HEK293 (cell line): ENCODE measurements at regions of chr12 and their contacts with region 1.

Region 1: GRCh38 chr12:49279706-49280159 is 14.9 kb downstream of the TUBA1C start:
- H3K4me3 ChIP-seq: no peak overlapping the region
- H3K27ac ChIP-seq: peak overlapping the region; percentile 65
- H3K4me1 ChIP-seq: peaks cover 4% of the 10 kb centered on the region; the same call in 1 of the 2 replicates
- CTCF ChIP-seq: no peak

Region 2: GRCh38 chr12:49264738-49265515 is 14.8 kb before region 1 on chr12 and contains the start of gene TUBA1C:
- CTCF ChIA-PET with region 1: interaction called, 5 read pairs
- POLR2A ChIA-PET with region 1: interaction called, 33 read pairs
- H3K4me3 ChIP-seq: peak within 1 kb of the TSS; percentile 94
- H3K27ac ChIP-seq: peak within 1 kb of the TSS; percentile 84
- H3K4me1 ChIP-seq: peaks cover 5% of the 10 kb centered on the region
- CTCF ChIP-seq: 0 out of 2 replicates have a peak, but pooled peaks have one; percentile 17

Region 3: GRCh38 chr12:49342066-49342913 is 62.6 kb after region 1 on chr12:
- CTCF ChIA-PET with region 1: interaction called, 29 read pairs
- POLR2A ChIA-PET with region 1: interaction called, 3 read pairs
- H3K4me3 ChIP-seq: peak overlapping the region; percentile 20
- H3K27ac ChIP-seq: peak overlapping the region; percentile 21; the same call in 1 of the 2 replicates
- H3K4me1 ChIP-seq: peaks cover 22% of the 10 kb centered on the region
- CTCF ChIP-seq: peak; percentile 88

Region 4: DNA sequence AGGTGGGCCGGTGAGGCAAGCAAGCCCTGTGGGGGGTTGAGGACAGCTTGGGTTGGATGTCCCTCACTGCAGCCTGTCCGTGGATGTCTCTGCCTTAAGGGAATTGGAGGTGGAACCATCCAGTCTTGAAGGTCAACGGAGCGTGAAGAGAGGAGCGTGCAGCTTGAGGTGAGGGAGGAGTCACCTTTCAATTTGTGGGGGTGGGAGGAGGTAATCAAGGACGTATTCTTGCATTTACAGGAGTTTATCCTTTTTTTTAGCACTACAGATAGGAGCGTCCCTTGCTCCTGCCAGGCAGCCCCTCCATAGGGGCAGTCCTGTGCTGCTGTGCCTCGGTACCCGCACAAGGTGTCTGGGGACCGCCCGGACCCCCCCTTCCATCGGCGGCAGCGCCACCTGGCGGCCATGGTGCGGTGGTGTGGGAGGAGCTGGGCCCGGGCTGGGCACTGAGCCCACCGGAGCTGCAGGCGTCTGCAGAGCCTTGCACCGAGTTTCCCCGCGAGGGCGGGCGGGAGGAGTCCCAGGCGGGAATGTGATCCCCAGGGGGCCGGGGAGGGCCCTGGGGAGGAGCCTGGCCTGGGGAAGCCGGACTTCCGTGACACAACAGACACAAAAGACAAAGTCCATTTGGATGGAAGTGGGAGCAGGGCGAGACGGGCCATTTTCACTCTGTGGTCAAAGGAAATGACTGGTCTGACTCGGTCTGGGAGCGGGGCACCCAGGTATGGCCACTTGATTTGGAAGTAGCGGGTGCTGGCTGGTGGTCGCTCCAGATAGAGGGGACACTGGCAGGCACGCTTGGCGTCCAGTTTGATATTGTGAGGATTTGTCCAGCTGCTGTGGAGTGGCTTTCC is 67.9 kb after region 1 on chr12:
- CTCF ChIA-PET with region 1: interaction called, 29 read pairs
- POLR2A ChIA-PET with region 1: interaction called, 3 read pairs
- H3K4me3 ChIP-seq: peak overlapping the region; percentile 32
- H3K27ac ChIP-seq: peak overlapping the region; percentile 80; the same call in 1 of the 2 replicates
- H3K4me1 ChIP-seq: peaks cover 21% of the 10 kb centered on the region
- CTCF ChIP-seq: peak; percentile 97